Right ventricle myocardium inferior (tissue), 1 donor: ENCODE measurements at regions of chr3 and their contacts with region 1.

Region 1: GRCh38 chr3:77038468-77038929 is 1.4 kb upstream of the ROBO2 start:
- DNase-seq: peak; percentile 74
- ATAC-seq: peak; percentile 92

Region 2: GRCh38 chr3:76789237-76789636 is 249.3 kb before region 1 on chr3:
- intact Hi-C with region 1: no loop called
- DNase-seq: no peak
- ATAC-seq: no peak

Region 3: GRCh38 chr3:77254967-77255831 is 216.7 kb after region 1 on chr3:
- intact Hi-C with region 1: loop called (anchors 2 kb)
- DNase-seq: no peak
- ATAC-seq: no peak

Region 4: GRCh38 chr3:77449459-77450350 is 411.2 kb after region 1 on chr3:
- intact Hi-C with region 1: no loop called
- DNase-seq: no peak
- ATAC-seq: no peak

Region 5: DNA sequence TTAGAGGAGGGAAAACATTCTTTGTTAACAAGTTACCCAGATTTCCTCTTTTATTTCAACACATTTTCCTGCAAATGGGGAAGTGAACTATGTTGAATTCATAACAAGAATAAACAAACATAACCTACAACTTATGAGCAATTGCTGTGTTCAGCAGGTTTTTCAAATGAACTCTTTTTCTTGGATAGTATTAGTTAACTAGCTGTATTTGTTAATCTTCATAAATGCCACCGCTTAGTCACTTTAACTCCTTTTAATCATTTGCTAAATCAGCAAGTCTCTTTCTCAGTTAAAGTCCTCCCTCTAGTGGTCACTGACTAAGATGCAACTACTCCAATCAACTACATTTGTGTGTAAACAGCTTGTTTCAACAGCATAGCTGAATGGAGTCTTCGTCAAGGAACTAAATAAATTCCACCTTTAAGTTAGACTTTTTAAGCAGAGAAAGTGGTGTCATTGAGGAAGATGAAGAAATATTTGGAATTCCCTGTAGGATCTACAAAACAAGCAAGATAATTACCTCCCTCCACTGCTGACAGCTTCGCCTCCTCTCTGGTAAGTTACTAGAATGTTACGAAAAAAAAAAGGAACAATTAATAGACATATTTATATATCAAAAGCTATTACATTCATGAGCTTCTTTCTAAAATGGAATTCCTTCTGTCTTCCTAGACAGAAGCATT is 1607.3 kb after region 1 on chr3:
- intact Hi-C with region 1: loop called (anchors 5 kb)
- DNase-seq: no peak
- ATAC-seq: no peak